Heart right ventricle (tissue), 16 donors: ENCODE measurements at regions of chr18 and their contacts with region 1.

Region 1: GRCh38 chr18:57891707-57892391 is 88.7 kb upstream of the ATP8B1 start:
- DNase-seq: no peak
- ATAC-seq: no peak
- H3K4me3 ChIP-seq: no peak overlapping the region
- H3K27ac ChIP-seq: no peak overlapping the region
- H3K4me1 ChIP-seq: no peaks in the 10 kb centered on the region
- H3K27me3 ChIP-seq: no peaks in the 10 kb centered on the region
- CTCF ChIP-seq: no peak

Region 2: GRCh38 chr18:57943723-57944122 is 51.9 kb after region 1 on chr18:
- intact Hi-C with region 1: loop called in 1 of 10 experiments (anchors 5 kb)
- DNase-seq: no peak
- ATAC-seq: no peak
- H3K4me3 ChIP-seq: no peak overlapping the region
- H3K27ac ChIP-seq: no peak overlapping the region
- H3K4me1 ChIP-seq: no peaks in the 10 kb centered on the region
- H3K27me3 ChIP-seq: peaks cover 0 to 5% (median 3%) of the 10 kb centered on the region in 7 donors
- CTCF ChIP-seq: no peak